ENCODE measurements at regions of chr12 and their contacts with region 1.

Region 1: DNA sequence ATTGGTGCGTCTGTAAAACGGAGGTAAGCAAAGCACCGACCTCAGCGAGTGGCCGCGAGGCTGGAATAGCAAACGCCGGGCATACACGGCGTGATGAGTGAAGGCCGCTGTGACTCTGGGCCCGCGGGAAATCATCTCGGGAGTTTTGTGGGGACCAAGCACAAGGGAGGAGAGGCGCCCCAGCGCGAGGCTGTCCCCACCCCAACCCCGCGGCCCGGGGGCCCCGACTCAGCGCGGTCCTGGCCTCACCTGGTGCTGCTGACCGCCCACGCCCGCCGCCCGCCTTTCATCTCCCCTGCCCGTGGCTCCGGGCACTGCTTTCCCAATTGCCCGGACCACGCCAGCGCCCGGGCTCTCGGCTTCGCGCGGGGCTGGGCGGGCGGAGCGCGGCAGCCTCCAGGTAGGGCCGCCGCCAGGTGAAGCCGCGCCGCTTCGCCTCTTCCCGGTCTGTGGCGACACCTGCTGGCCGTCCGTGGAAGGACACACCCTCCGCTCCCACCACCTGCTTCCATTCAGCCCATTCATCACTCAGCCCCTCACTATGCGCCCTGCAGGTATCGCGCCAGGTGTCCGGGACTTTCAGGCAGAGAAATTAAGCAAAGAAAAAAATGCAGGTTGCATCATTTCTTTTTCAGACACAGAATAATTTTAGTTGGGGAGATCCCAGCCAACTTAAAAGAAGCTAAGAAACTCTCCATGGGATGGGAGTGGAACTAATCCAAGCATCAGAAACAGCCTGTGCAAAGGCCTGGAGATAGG is 360.4 kb downstream of the MED13L start:
- DNase-seq: no peak
- ATAC-seq: peak; percentile 95
- H3K4me3 ChIP-seq: no peak overlapping the region
- H3K27ac ChIP-seq: no peak overlapping the region
- H3K4me1 ChIP-seq: no peaks in the 10 kb centered on the region
- H3K27me3 ChIP-seq: no peaks in the 10 kb centered on the region
- CTCF ChIP-seq: peak; percentile 85 to 96 (median 93)
- EP300 ChIP-seq: no peak
- POLR2A ChIP-seq: no peak
- RAD21 ChIP-seq: peak; percentile 83

Region 2: GRCh38 chr12:114625294-114625851 is 1291.7 kb before region 1 on chr12:
- CTCF ChIA-PET with region 1: interaction called, 22 read pairs
- POLR2A ChIA-PET with region 1: no interaction called
- RAD21 ChIA-PET with region 1: interaction called, 11 read pairs
- SMC1A ChIA-PET with region 1: interaction called, 18 read pairs
- in situ Hi-C with region 1: loop called (anchors 10 kb)
- intact Hi-C with region 1: loop called (anchors 1 kb)
- DNase-seq: no peak
- ATAC-seq: peak; percentile 82
- H3K4me3 ChIP-seq: no peak overlapping the region
- H3K27ac ChIP-seq: no peak overlapping the region
- H3K4me1 ChIP-seq: no peaks in the 10 kb centered on the region
- H3K27me3 ChIP-seq: no peaks in the 10 kb centered on the region
- CTCF ChIP-seq: peak; percentile 66 to 74 (median 74)
- EP300 ChIP-seq: no peak
- POLR2A ChIP-seq: no peak
- RAD21 ChIP-seq: peak; percentile 67

Region 3: GRCh38 chr12:114662512-114663177 is 1254.4 kb before region 1 on chr12:
- CTCF ChIA-PET with region 1: interaction called, 16 read pairs
- POLR2A ChIA-PET with region 1: no interaction called
- RAD21 ChIA-PET with region 1: interaction called, 4 read pairs
- SMC1A ChIA-PET with region 1: interaction called, 6 read pairs
- in situ Hi-C with region 1: loop called (anchors 5 kb)
- intact Hi-C with region 1: loop called (anchors 1 kb)
- DNase-seq: peak; percentile 3
- ATAC-seq: peak; percentile 60
- H3K4me3 ChIP-seq: no peak overlapping the region
- H3K27ac ChIP-seq: no peak overlapping the region
- H3K4me1 ChIP-seq: no peaks in the 10 kb centered on the region
- H3K27me3 ChIP-seq: peaks cover 3 to 7% of the 10 kb centered on the region in 2 experiments
- CTCF ChIP-seq: peak; percentile 86 to 92 (median 89)
- EP300 ChIP-seq: no peak
- POLR2A ChIP-seq: no peak
- RAD21 ChIP-seq: peak; percentile 99

Region 4: GRCh38 chr12:115794659-115795081 is 122.4 kb before region 1 on chr12:
- CTCF ChIA-PET with region 1: no interaction called
- POLR2A ChIA-PET with region 1: no interaction called
- RAD21 ChIA-PET with region 1: no interaction called
- SMC1A ChIA-PET with region 1: interaction called, 3 read pairs
- in situ Hi-C with region 1: no loop called
- intact Hi-C with region 1: loop called (anchors 10 kb)
- DNase-seq: no peak
- ATAC-seq: no peak
- H3K4me3 ChIP-seq: no peak overlapping the region
- H3K27ac ChIP-seq: no peak overlapping the region
- H3K4me1 ChIP-seq: no peaks in the 10 kb centered on the region
- H3K27me3 ChIP-seq: no peaks in the 10 kb centered on the region
- CTCF ChIP-seq: no peak
- EP300 ChIP-seq: no peak
- POLR2A ChIP-seq: no peak
- RAD21 ChIP-seq: 0 out of 2 replicates have a peak, but pooled peaks have one; percentile 2

Region 5: DNA sequence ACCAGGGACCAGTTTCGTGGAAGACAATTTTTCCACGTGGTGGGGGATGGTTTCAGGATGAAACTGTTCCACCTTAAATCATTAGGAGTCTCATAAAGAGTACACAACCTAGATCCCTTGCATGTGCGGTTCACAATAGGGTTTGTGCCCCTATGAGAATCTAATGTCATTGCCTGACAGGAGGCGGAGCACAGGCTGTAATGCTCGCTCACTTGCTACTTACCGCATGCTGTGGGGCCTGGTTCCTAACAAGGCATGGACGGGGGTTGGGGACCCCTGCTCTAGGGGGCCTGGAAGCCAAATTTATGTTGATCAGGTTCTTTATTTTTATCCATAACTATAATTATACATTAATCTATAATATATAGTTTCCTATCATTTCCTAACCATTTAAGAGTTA is 45.1 kb after region 1 on chr12:
- CTCF ChIA-PET with region 1: no interaction called
- POLR2A ChIA-PET with region 1: no interaction called
- RAD21 ChIA-PET with region 1: no interaction called
- SMC1A ChIA-PET with region 1: no interaction called
- in situ Hi-C with region 1: no loop called
- intact Hi-C with region 1: no loop called
- DNase-seq: no peak
- ATAC-seq: no peak
- H3K4me3 ChIP-seq: no peak overlapping the region
- H3K27ac ChIP-seq: no peak overlapping the region
- H3K4me1 ChIP-seq: no peaks in the 10 kb centered on the region
- H3K27me3 ChIP-seq: no peaks in the 10 kb centered on the region
- CTCF ChIP-seq: no peak
- EP300 ChIP-seq: no peak
- POLR2A ChIP-seq: no peak
- RAD21 ChIP-seq: no peak